Natural killer cell (primary cell): ENCODE measurements at regions of chr17 and their contacts with region 1.

Region 1: DNA sequence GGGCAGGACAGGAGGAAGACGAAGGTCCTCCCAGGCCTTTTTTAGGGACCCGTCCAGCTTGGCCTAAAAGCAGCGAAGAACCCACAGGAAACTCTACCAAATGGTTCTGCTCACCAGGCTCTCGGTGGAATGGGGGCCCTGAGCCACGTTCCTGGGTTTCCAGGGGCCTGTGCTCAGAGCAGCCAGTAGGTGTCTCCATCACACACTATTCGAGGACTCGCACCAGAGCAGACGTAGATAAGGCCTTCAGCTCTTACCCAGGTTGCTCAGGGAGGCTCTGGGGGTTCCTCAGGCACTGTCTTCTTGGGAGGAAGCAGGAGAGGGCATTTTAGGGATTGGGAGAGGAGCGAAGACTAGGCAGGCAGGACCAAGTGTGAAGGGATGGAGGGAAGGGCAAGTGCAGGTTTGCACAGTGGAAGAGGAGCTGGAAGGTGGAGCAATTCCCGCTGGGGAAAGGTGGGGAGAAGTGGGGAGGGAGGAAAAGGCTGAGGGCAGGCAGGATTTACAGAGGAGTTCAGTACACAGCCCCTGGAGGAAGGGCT is 157.1 kb downstream of the RGS9 start:
- DNase-seq: peak; percentile 27 to 79
- ATAC-seq: peak; percentile 61 to 93 (median 64)
- H3K4me3 ChIP-seq: no peak overlapping the region
- H3K4me3 Mint-ChIP-seq: no peak overlapping the region
- H3K27ac ChIP-seq: no peak overlapping the region
- H3K27ac Mint-ChIP-seq: peak overlapping the region in 1 of 2 donors; percentile 7
- H3K4me1 ChIP-seq: peaks cover 6% of the 10 kb centered on the region
- H3K4me1 Mint-ChIP-seq: peaks cover 6% of the 10 kb centered on the region in 2 donors
- H3K27me3 ChIP-seq: no peaks in the 10 kb centered on the region
- H3K27me3 Mint-ChIP-seq: peaks cover 7 to 24% of the 10 kb centered on the region in 2 donors
- CTCF ChIP-seq: peak; percentile 61

Region 2: GRCh38 chr17:65556014-65556909 is 262.0 kb after region 1 on chr17:
- intact Hi-C with region 1: loop called (anchors 1 kb)
- DNase-seq: peak; percentile 79 to 92
- ATAC-seq: peak; percentile 49 to 62 (median 62)
- H3K4me3 ChIP-seq: peak overlapping the region; percentile 6
- H3K4me3 Mint-ChIP-seq: no peak overlapping the region
- H3K27ac ChIP-seq: peak overlapping the region; percentile 41
- H3K27ac Mint-ChIP-seq: no peak overlapping the region
- H3K4me1 ChIP-seq: peaks cover 4% of the 10 kb centered on the region
- H3K4me1 Mint-ChIP-seq: peaks cover 6% of the 10 kb centered on the region in 2 donors
- H3K27me3 ChIP-seq: peaks cover 8% of the 10 kb centered on the region
- H3K27me3 Mint-ChIP-seq: peaks cover 9 to 12% of the 10 kb centered on the region in 2 donors
- CTCF ChIP-seq: peak; percentile 88

Region 3: GRCh38 chr17:66165513-66166123 is 871.4 kb after region 1 on chr17:
- intact Hi-C with region 1: loop called (anchors 1 kb)
- DNase-seq: peak in 1 of 2 donors; percentile 75
- ATAC-seq: peak in 2 of 3 donors; percentile 66 to 67
- H3K4me3 ChIP-seq: no peak overlapping the region
- H3K4me3 Mint-ChIP-seq: no peak overlapping the region
- H3K27ac ChIP-seq: no peak overlapping the region
- H3K27ac Mint-ChIP-seq: no peak overlapping the region
- H3K4me1 ChIP-seq: no peaks in the 10 kb centered on the region
- H3K4me1 Mint-ChIP-seq: no peaks in the 10 kb centered on the region
- H3K27me3 ChIP-seq: no peaks in the 10 kb centered on the region
- H3K27me3 Mint-ChIP-seq: no peaks in the 10 kb centered on the region
- CTCF ChIP-seq: peak; percentile 72